Endothelial cell of umbilical vein (primary cell): ENCODE measurements at regions of chr5 and their contacts with region 1.

Region 1: DNA sequence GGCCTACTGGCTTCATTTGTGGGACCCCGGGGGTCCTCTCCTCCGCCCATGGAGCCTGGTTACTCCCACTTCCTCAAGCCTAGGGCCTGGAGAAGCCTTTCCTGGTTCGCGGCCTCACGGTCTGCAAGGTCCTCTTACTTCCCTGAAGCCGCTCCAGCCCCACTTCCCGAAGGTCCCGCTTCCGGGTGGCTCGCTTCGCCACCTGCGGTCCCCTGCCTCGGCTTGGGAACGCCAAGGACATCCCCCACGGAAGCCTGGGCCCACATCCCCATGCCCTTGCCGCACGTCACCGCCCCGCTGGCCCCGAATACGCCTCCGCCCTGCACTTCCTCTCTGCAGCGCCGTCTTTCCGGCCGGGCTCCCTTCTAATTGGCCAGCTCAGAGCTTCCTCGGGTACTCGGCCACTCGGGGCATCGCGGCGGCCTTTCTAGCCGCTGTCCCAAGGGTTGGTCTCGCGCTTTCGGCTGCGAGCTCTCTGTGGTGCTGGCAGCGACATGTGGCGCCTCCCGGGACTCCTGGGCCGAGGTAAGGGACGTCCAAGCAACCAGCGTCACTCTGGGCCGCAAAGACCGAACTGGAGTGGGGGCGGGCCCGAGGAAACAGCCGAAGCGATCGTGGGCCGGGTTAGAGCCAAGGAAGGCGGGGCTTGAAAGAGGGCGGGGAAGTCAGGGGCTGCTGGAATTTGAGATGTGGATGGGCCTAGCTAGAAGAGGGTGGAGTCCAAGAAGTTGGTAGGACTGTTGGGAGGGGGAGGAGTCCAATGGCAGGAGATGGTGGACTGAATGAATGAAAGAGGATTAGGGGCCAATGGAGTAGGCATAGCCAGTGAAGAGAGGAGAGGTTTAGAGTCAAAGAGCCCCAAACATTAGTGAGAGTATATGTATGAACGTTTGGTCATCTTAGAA is at the start of gene DELE1:
- DNase-seq: peak; percentile 95
- H3K4me3 ChIP-seq: peak within 1 kb of the TSS; percentile 28 to 63 (median 47)
- H3K27ac ChIP-seq: peak within 1 kb of the TSS; percentile 84
- H3K4me1 ChIP-seq: peaks cover 15% of the 10 kb centered on the region
- H3K27me3 ChIP-seq: no peaks in the 10 kb centered on the region
- CTCF ChIP-seq: no peak
- POLR2A ChIP-seq: peak; percentile 76
- total RNA-seq, gene DELE1: 67.0 and 105 TPM in 2 replicates

Region 2: GRCh38 chr5:140408750-140409256 is 1514.9 kb before region 1 on chr5:
- CTCF ChIA-PET with region 1: no interaction called
- POLR2A ChIA-PET with region 1: interaction called, 10 read pairs
- dilution Hi-C with region 1: no loop called
- intact Hi-C with region 1: no loop called
- DNase-seq: no peak
- H3K4me3 ChIP-seq: no peak overlapping the region
- H3K27ac ChIP-seq: no peak overlapping the region
- H3K4me1 ChIP-seq: no peaks in the 10 kb centered on the region
- H3K27me3 ChIP-seq: no peaks in the 10 kb centered on the region
- CTCF ChIP-seq: no peak
- POLR2A ChIP-seq: no peak

Region 3: GRCh38 chr5:141787376-141787775 is 136.3 kb before region 1 on chr5:
- CTCF ChIA-PET with region 1: no interaction called
- POLR2A ChIA-PET with region 1: no interaction called
- dilution Hi-C with region 1: no loop called
- intact Hi-C with region 1: no loop called
- DNase-seq: no peak
- H3K4me3 ChIP-seq: no peak overlapping the region
- H3K27ac ChIP-seq: no peak overlapping the region
- H3K4me1 ChIP-seq: no peaks in the 10 kb centered on the region
- H3K27me3 ChIP-seq: peaks cover 6 to 10% of the 10 kb centered on the region in 2 experiments
- CTCF ChIP-seq: no peak
- POLR2A ChIP-seq: no peak

Region 4: DNA sequence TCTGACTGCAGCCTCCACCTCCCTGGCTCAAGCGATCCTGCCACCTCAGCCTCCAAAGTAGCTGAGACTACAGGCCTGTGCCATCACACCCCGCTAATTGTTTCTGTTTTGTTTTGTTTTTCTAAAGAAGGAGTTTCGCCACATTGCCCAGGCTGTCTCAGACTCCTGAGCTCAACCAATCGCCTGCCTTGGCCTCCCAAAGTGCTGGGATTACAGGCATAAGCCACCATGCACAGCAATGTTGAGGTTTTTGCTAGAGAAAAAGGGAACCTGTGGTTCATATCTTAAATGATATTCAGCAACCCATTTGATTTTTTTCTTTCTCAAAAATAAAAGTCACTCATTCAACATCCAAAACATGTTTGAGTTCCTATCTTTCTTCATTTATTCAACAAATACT is 20.4 kb before region 1 on chr5:
- CTCF ChIA-PET with region 1: no interaction called
- POLR2A ChIA-PET with region 1: no interaction called
- dilution Hi-C with region 1: no loop called
- intact Hi-C with region 1: no loop called
- DNase-seq: no peak
- H3K4me3 ChIP-seq: no peak overlapping the region
- H3K27ac ChIP-seq: no peak overlapping the region
- H3K4me1 ChIP-seq: no peaks in the 10 kb centered on the region
- H3K27me3 ChIP-seq: peaks cover 4 to 9% of the 10 kb centered on the region in 2 experiments
- CTCF ChIP-seq: no peak
- POLR2A ChIP-seq: no peak

Region 5: GRCh38 chr5:141940695-141941271 is 17.1 kb after region 1 on chr5:
- CTCF ChIA-PET with region 1: interaction called, 11 read pairs
- POLR2A ChIA-PET with region 1: interaction called, 9 read pairs
- dilution Hi-C with region 1: no loop called
- intact Hi-C with region 1: loop called (anchors 2 kb)
- DNase-seq: no peak
- H3K4me3 ChIP-seq: no peak overlapping the region
- H3K27ac ChIP-seq: peak overlapping the region; percentile 19
- H3K4me1 ChIP-seq: peaks cover 27% of the 10 kb centered on the region
- H3K27me3 ChIP-seq: no peaks in the 10 kb centered on the region
- CTCF ChIP-seq: peak; percentile 5 to 30
- POLR2A ChIP-seq: no peak